ENCODE measurements at regions of chr16 and their contacts with region 1.

Region 1: GRCh38 chr16:96935-97381 is 18.9 kb downstream of the MPG start:
- DNase-seq: peak; percentile 78 to 94 (median 86)
- ATAC-seq: peak; percentile 93 to 99 (median 96)
- H3K4me3 ChIP-seq: no peak overlapping the region
- H3K4me3 Mint-ChIP-seq: no peak overlapping the region
- H3K27ac ChIP-seq: no peak overlapping the region
- H3K27ac Mint-ChIP-seq: no peak overlapping the region
- H3K4me1 ChIP-seq: peaks cover 0 to 10% of the 10 kb centered on the region in 2 experiments
- H3K4me1 Mint-ChIP-seq: peaks cover 5 to 8% (median 8%) of the 10 kb centered on the region in 3 donors
- H3K27me3 ChIP-seq: no peaks in the 10 kb centered on the region
- H3K27me3 Mint-ChIP-seq: no peaks in the 10 kb centered on the region

Region 2: GRCh38 chr16:53346-54236 is 43.4 kb before region 1 on chr16 and contains the starts of genes POLR3K and SNRNP25:
- CTCF ChIA-PET with region 1: interaction called, 3 to 11 read pairs
- POLR2A ChIA-PET with region 1: no interaction called
- DNase-seq: peak; percentile 90 to 99 (median 97)
- ATAC-seq: peak; percentile 95 to 97 (median 96)
- H3K4me3 ChIP-seq: peak within 1 kb of the TSS; percentile 87 to 88
- H3K4me3 Mint-ChIP-seq: peak within 1 kb of the TSS; percentile 97 to 98 (median 97)
- H3K27ac ChIP-seq: peak within 1 kb of the TSS; percentile 44
- H3K27ac Mint-ChIP-seq: peak within 1 kb of the TSS; percentile 87 to 93
- H3K4me1 ChIP-seq: peaks cover 7 to 32% of the 10 kb centered on the region in 2 experiments
- H3K4me1 Mint-ChIP-seq: peaks cover 28 to 31% (median 28%) of the 10 kb centered on the region in 3 donors
- H3K27me3 ChIP-seq: no peaks in the 10 kb centered on the region
- H3K27me3 Mint-ChIP-seq: no peaks in the 10 kb centered on the region
- total RNA-seq, gene POLR3K: 11.1 to 24.3 (median 21.3) TPM
- total RNA-seq, gene SNRNP25: 6.8 to 11.4 (median 9.0) TPM

Region 3: DNA sequence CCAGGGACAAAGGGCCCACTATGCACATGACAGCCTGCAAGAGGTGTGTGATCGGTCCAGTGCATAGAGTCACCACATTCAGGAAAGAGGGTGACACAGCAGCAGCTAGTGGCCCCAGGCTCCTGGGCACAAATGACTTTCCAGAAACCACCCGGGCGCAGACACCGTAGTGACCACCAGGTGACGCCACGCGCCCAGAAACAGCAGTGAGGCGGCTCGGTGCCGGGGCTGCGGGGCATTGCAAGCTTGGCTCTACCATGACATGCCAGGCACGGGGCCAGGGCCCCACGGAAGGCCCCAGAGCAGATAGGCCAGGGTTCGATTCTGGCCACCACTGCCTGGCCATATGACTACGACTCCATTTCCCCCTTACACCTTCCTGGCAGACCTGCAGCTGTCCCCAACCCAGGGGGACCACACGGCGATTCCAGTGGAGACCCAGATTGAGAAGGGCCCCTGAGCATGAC is 31.3 kb before region 1 on chr16:
- CTCF ChIA-PET with region 1: interaction called, 11 to 19 read pairs
- POLR2A ChIA-PET with region 1: no interaction called
- DNase-seq: peak; percentile 59 to 86 (median 78)
- ATAC-seq: peak; percentile 84 to 97 (median 89)
- H3K4me3 ChIP-seq: no peak overlapping the region
- H3K4me3 Mint-ChIP-seq: no peak overlapping the region
- H3K27ac ChIP-seq: no peak overlapping the region
- H3K27ac Mint-ChIP-seq: no peak overlapping the region
- H3K4me1 ChIP-seq: peaks cover 0 to 5% of the 10 kb centered on the region in 2 experiments
- H3K4me1 Mint-ChIP-seq: peaks cover 0 to 7% (median 3%) of the 10 kb centered on the region in 3 donors
- H3K27me3 ChIP-seq: peaks cover 0 to 51% of the 10 kb centered on the region in 2 experiments
- H3K27me3 Mint-ChIP-seq: peaks cover 2 to 19% of the 10 kb centered on the region in 2 donors

Region 4: GRCh38 chr16:1214719-1215118 is 1117.8 kb after region 1 on chr16:
- CTCF ChIA-PET with region 1: interaction called in 1 of 2 experiments, 10 read pairs
- POLR2A ChIA-PET with region 1: no interaction called
- DNase-seq: no peak
- ATAC-seq: no peak
- H3K4me3 ChIP-seq: no peak overlapping the region
- H3K4me3 Mint-ChIP-seq: no peak overlapping the region
- H3K27ac ChIP-seq: no peak overlapping the region
- H3K27ac Mint-ChIP-seq: no peak overlapping the region
- H3K4me1 ChIP-seq: peaks cover 0 to 2% of the 10 kb centered on the region in 2 experiments
- H3K4me1 Mint-ChIP-seq: no peaks in the 10 kb centered on the region
- H3K27me3 ChIP-seq: peaks cover 0 to 10% of the 10 kb centered on the region in 2 experiments
- H3K27me3 Mint-ChIP-seq: no peaks in the 10 kb centered on the region

Measured in T-cell (primary cell).